PC-9 (cell line): ENCODE measurements at regions of chr2 and their contacts with region 1.

Region 1: DNA sequence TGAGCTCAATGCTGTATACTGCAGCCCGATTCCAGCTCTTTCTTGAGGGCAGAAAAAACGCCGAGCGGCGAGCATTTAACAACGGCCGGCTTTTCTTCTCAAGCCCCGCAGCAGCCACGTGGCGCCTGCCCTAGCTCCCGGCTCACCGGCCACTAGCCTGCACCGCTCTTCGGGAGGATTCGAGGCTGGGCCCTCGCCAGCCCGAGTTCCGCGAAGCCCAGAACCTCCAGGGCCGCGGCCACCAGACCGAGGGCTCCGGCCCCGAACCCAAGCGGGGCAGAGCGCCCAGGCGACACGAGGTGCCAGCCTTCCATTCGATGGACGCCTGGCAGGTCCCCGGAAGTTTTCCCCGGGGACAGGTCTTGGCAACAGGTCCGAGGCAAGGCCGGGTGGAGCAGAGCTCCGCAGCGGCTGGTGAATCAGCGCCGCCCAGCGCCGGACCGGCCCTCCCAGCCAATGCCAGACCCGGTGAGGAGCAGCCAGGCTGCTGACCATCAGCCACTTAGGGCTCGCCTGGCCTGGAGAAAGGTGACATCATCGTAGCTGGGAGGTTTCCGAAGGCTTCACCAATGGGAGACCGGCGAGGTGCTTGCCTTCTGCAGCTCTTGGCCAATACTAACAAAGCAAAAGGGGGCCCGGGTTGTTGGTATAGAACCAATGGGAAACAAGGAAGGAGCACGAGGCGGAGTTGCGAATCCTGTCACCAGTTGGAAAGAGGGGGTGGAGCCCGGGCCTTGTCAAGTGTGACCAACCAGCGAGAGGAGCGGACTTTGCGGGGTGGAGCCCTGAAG is 544 bp upstream of the MXD1 start:
- DNase-seq: peak; percentile 99 to 100
- H3K4me3 ChIP-seq: peak overlapping the region; percentile 75
- H3K27ac ChIP-seq: peak overlapping the region; percentile 80
- H3K4me1 ChIP-seq: peaks cover 45% of the 10 kb centered on the region
- H3K27me3 ChIP-seq: no peaks in the 10 kb centered on the region
- CTCF ChIP-seq: peak; percentile 19; the same call in 1 of the 2 replicates

Region 2: GRCh38 chr2:69724540-69725159 is 189.7 kb before region 1 on chr2:
- CTCF ChIA-PET with region 1: interaction called, 18 read pairs
- POLR2A ChIA-PET with region 1: no interaction called
- intact Hi-C with region 1: no loop called
- DNase-seq: peak; percentile 62 to 84
- H3K4me3 ChIP-seq: no peak overlapping the region
- H3K27ac ChIP-seq: no peak overlapping the region
- H3K4me1 ChIP-seq: no peaks in the 10 kb centered on the region
- H3K27me3 ChIP-seq: no peaks in the 10 kb centered on the region
- CTCF ChIP-seq: peak; percentile 95

Region 3: GRCh38 chr2:69858261-69858660 is 56.1 kb before region 1 on chr2:
- CTCF ChIA-PET with region 1: no interaction called
- POLR2A ChIA-PET with region 1: no interaction called
- intact Hi-C with region 1: no loop called
- DNase-seq: no peak
- H3K4me3 ChIP-seq: no peak overlapping the region
- H3K27ac ChIP-seq: no peak overlapping the region
- H3K4me1 ChIP-seq: no peaks in the 10 kb centered on the region
- H3K27me3 ChIP-seq: no peaks in the 10 kb centered on the region
- CTCF ChIP-seq: no peak

Region 4: GRCh38 chr2:69997015-69997830 is 82.9 kb after region 1 on chr2:
- CTCF ChIA-PET with region 1: no interaction called
- POLR2A ChIA-PET with region 1: no interaction called
- intact Hi-C with region 1: loop called (anchors 5 kb)
- DNase-seq: peak; percentile 82 to 93
- H3K4me3 ChIP-seq: no peak overlapping the region; the same call in 1 of the 2 replicates
- H3K27ac ChIP-seq: peak overlapping the region; percentile 87
- H3K4me1 ChIP-seq: peaks cover 53% of the 10 kb centered on the region
- H3K27me3 ChIP-seq: no peaks in the 10 kb centered on the region
- CTCF ChIP-seq: no peak

Region 5: DNA sequence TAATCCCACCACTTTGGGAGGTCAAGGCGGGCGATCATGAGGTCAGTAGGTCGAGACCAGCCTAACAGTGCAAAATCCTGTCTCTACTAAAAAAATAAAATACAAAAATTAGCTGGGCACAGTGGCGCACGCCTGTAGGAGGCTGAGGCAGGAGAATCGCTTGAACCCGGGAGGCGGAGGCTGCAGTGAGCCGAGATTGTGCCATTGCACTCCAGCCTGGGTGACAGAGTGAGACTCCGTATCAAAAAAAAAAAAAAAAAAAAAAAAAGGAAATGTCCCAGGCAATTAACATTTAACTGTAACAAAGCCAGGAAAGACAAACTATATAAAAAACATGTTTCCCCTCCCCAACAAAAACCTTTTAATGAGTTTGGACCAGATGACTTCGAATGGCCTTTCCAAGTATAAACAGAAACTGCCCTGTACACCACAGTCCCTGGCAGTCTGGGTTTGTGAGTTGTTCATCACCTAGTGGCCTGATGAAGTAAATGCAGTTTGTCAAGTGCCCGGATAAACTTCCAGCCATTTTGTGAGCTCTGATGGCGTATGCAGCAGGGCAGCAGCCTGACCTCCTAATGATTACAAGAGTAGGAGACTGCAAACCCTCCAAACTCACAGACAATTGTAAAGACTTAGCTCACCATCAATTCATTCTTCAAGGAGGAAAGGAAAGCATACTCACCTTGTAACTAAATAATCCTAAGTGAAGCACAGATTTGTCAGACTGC is 156.3 kb after region 1 on chr2:
- CTCF ChIA-PET with region 1: interaction called, 9 read pairs
- POLR2A ChIA-PET with region 1: interaction called, 12 read pairs
- intact Hi-C with region 1: loop called (anchors 1 kb)
- DNase-seq: peak; percentile 44 to 53
- H3K4me3 ChIP-seq: no peak overlapping the region
- H3K27ac ChIP-seq: peak overlapping the region; percentile 9; the same call in 1 of the 2 replicates
- H3K4me1 ChIP-seq: no peaks in the 10 kb centered on the region
- H3K27me3 ChIP-seq: no peaks in the 10 kb centered on the region
- CTCF ChIP-seq: peak; percentile 85

Region 6: DNA sequence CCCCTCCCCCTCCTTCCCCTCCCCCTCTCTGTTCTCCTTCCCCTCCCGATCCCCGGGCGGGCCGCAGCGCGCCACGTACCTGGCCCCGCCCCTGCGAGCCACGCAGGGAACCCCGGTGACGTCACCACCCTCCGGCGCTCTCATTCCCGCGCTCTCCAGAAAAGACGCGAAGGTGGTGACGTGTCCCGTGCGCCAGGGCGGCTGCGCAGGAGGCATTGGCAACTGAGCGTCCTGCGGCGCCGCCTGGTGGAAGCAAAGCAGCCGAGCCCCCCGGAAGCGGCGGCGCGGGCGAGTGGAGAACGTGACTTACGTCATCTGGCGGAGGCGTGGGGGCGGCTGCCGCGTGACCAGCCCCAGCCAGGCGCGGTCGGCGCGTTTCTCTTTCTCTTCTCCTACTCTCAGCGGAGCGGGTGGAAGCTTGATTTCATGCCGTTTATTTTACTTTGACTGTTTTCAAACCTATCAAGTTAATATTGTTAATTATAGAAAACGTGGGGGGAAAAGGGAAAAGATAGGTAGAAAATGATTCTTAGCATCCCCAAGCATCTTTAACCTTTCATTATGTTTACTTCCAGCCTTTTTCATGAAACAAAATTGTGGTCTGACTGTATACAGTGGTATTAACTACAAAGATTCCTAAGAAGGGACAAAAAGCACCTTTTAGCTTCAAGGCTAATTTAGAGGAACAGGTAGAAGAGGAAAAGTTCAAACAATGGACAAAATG is 228.4 kb after region 1 on chr2:
- CTCF ChIA-PET with region 1: interaction called, 8 read pairs
- POLR2A ChIA-PET with region 1: interaction called, 5 read pairs
- intact Hi-C with region 1: loop called (anchors 1 kb)
- DNase-seq: peak; percentile 93 to 99
- H3K4me3 ChIP-seq: peak overlapping the region; percentile 66
- H3K27ac ChIP-seq: peak overlapping the region; percentile 99
- H3K4me1 ChIP-seq: peaks cover 32% of the 10 kb centered on the region
- H3K27me3 ChIP-seq: no peaks in the 10 kb centered on the region
- CTCF ChIP-seq: peak; percentile 86

Region 7: GRCh38 chr2:70258532-70258874 is 344.1 kb after region 1 on chr2:
- CTCF ChIA-PET with region 1: interaction called, 3 read pairs
- POLR2A ChIA-PET with region 1: interaction called, 12 read pairs
- intact Hi-C with region 1: no loop called
- DNase-seq: peak in 1 of 2 experiments; percentile 19
- H3K4me3 ChIP-seq: peak overlapping the region; percentile 59
- H3K27ac ChIP-seq: no peak overlapping the region
- H3K4me1 ChIP-seq: peaks cover 4% of the 10 kb centered on the region; the same call in 1 of the 2 replicates
- H3K27me3 ChIP-seq: no peaks in the 10 kb centered on the region
- CTCF ChIP-seq: no peak

Region 8: DNA sequence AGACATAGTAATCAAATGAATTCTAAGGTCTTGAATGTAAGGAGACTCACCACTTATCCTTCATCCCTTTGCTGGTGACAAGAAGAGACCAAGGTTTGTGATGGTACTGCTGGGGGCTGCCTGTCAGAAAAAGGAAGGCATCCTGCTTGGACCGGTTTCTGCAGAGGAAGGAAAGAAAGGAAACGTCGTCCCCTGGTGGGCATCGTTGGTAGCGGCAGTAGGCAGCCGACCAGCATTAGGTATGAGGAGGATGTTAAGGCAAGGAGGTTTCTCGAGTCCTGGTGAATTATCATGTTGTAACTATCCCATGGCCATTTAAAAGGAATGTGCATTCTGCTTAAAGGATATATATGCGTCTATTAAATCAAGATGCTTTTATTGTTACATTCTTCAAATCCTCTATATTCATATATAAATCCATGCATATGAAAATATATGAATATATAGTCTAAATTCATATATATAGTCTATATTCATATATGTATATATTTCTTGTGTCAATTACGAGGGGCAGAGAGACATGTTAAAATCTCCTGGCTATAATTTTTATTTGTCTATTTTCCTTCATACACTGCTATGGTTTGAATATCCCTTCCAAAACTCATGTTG is 733.6 kb after region 1 on chr2:
- CTCF ChIA-PET with region 1: no interaction called
- POLR2A ChIA-PET with region 1: no interaction called
- intact Hi-C with region 1: loop called (anchors 5 kb)
- DNase-seq: peak; percentile 53 to 78
- H3K4me3 ChIP-seq: no peak overlapping the region
- H3K27ac ChIP-seq: no peak overlapping the region
- H3K4me1 ChIP-seq: no peaks in the 10 kb centered on the region
- H3K27me3 ChIP-seq: no peaks in the 10 kb centered on the region
- CTCF ChIP-seq: peak; percentile 95